ENCODE measurements at regions of chr6 and their contacts with region 1.

Region 1: GRCh38 chr6:52419809-52420670 is at the start of gene EFHC1:
- DNase-seq: peak; percentile 99
- ATAC-seq: peak; percentile 96 to 99 (median 98)
- H3K4me3 ChIP-seq: peak within 1 kb of the TSS; percentile 59 to 81 (median 68)
- H3K27ac ChIP-seq: peak within 1 kb of the TSS; percentile 66 to 87 (median 68)
- H3K4me1 ChIP-seq: peaks cover 0 to 6% (median 1%) of the 10 kb centered on the region in 4 donors
- H3K27me3 ChIP-seq: no peaks in the 10 kb centered on the region
- CTCF ChIP-seq: no peak
- POLR2A ChIP-seq: peak; percentile 92
- total RNA-seq, gene EFHC1: 3.6 to 10.4 (median 6.0) TPM

Region 2: GRCh38 chr6:52497652-52498408 is 77.8 kb after region 1 on chr6:
- intact Hi-C with region 1: no loop called
- DNase-seq: no peak
- ATAC-seq: peak in 1 of 4 donors; percentile 7
- H3K4me3 ChIP-seq: no peak overlapping the region
- H3K27ac ChIP-seq: no peak overlapping the region
- H3K4me1 ChIP-seq: peaks cover 0 to 11% (median 4%) of the 10 kb centered on the region in 4 donors
- H3K27me3 ChIP-seq: no peaks in the 10 kb centered on the region
- CTCF ChIP-seq: no peak
- POLR2A ChIP-seq: no peak

Region 3: GRCh38 chr6:52598123-52598823 is 178.2 kb after region 1 on chr6:
- intact Hi-C with region 1: loop called (anchors 5 to 10 kb)
- DNase-seq: peak in 2 of 3 donors; percentile 42 to 57
- ATAC-seq: peak; percentile 92 to 97 (median 95)
- H3K4me3 ChIP-seq: peak overlapping the region in 2 of 3 donors; percentile 15 to 34
- H3K27ac ChIP-seq: no peak overlapping the region
- H3K4me1 ChIP-seq: peaks cover 0 to 9% (median 0%) of the 10 kb centered on the region in 4 donors
- H3K27me3 ChIP-seq: no peaks in the 10 kb centered on the region
- CTCF ChIP-seq: peak; percentile 60 to 69 (median 65)
- POLR2A ChIP-seq: no peak

Region 4: DNA sequence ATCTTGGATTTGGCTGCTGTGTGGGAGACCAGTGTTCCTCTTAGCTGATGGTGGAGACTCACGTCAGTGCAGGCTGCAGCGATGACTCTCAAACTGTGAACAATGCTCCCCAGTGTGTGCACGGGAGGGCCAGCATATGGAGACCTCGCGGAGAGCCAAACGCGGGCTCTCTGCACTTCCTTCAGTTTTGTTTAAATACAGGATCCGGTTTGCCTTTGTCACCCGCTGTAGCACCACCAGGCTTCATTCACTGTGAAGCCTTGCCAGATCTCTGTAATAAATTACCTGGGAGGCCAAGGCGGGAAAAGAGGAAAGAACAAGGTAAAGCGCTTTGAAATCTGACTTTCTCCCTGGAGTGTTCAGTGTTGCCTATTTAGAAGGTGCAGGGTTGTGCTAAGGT is 220.1 kb after region 1 on chr6:
- intact Hi-C with region 1: no loop called
- DNase-seq: no peak
- ATAC-seq: no peak
- H3K4me3 ChIP-seq: no peak overlapping the region
- H3K27ac ChIP-seq: no peak overlapping the region
- H3K4me1 ChIP-seq: peaks cover 0 to 8% (median 0%) of the 10 kb centered on the region in 4 donors
- H3K27me3 ChIP-seq: no peaks in the 10 kb centered on the region
- CTCF ChIP-seq: no peak
- POLR2A ChIP-seq: no peak

Region 5: DNA sequence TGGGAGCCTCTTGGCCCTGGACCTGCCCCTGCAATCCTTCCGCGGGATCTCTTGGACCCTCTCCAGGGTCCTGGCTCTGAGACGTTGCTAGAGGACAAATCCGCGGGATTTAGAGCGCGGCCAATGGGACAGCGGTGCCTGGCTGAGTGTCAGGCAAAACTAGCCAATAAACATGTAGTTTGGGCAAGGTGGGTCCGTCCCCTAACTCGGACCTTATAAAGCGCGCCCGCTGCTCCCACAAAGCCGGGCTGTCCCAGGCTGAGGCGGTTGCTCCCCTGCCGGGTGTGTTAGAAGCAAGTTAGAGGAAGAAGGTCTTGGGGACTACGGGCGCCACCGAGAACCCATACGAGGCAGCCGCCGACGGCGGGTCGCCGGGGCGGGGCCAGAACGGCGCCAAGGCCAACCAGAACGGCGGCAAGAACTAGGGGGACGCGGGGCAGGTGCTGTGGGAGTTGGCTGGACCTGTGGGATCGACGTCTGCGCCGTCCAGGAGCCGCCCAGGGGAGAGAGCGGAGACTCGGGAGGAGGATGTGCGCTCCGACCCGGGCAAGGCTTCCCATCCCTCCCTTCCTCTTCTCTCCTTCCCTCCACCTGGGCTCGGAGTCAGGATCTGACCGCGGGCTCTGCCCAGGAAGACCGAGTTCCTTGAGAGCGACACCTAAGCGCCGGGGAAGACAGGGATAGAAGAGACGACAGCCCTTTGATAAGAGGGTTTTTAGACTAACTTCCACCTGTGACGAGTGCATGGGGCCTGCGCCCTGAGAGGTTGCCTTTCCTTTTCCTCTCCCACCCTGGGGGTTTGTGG is 244.3 kb after region 1 on chr6:
- intact Hi-C with region 1: loop called (anchors 5 kb)
- DNase-seq: peak; percentile 92 to 95 (median 92)
- ATAC-seq: peak; percentile 92 to 97 (median 94)
- H3K4me3 ChIP-seq: peak overlapping the region; percentile 73 to 76 (median 75)
- H3K27ac ChIP-seq: peak overlapping the region; percentile 50 to 64 (median 63)
- H3K4me1 ChIP-seq: peaks cover 0 to 16% (median 5%) of the 10 kb centered on the region in 4 donors
- H3K27me3 ChIP-seq: no peaks in the 10 kb centered on the region
- CTCF ChIP-seq: no peak
- POLR2A ChIP-seq: peak; percentile 98